ENCODE measurements at regions of chr2 and their contacts with region 1.

Region 1: GRCh38 chr2:190088917-190089316 is 26.4 kb upstream of the MSTN start:
- DNase-seq: peak; percentile 20
- ATAC-seq: peak; percentile 91
- H3K4me3 ChIP-seq: no peak overlapping the region
- H3K27ac ChIP-seq: no peak overlapping the region
- H3K4me1 ChIP-seq: no peaks in the 10 kb centered on the region
- H3K27me3 ChIP-seq: no peaks in the 10 kb centered on the region
- CTCF ChIP-seq: peak; percentile 60 to 82 (median 63); a peak in 5 of 6 replicates
- EP300 ChIP-seq: no peak
- POLR2A ChIP-seq: no peak
- RAD21 ChIP-seq: peak; percentile 93

Region 2: DNA sequence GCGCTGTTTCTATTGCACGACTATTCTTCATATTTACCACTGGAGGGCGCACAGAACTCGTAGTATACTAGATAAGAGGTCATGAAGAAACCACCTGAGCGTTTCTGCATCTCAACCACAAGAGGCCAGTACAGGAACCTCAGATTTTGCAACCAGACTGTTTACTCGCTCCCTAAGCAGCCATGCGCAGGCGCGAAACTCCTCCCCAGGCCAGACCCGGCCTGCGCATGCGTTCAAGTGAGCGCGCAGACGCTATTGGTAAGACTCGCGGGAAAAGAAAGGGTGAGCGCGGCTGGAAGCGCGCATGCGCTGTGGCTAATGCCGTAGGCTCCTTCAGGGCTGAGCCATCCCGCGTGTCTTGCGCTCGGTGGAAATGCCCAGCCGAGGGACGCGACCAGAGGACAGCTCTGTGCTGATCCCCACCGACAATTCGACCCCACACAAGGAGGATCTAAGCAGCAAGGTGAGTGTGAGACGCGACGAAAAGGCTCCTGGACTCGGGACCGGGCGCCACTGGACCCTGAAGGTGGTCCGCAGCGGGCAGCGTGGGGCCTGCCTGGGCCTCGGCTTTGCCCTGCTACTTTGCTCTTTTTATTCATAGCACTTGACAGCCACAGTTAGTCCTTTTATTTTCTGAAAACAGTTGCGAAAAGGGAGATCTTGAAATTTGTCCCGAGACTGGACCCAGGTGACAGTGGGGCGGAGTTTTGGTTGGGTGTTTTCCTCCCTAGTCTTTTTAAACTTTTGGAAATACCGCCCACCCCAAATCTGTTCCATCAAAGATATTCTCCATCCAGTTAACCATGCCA is 427.6 kb before region 1 on chr2 and contains the start of gene ASNSD1:
- CTCF ChIA-PET with region 1: interaction called, 3 read pairs
- POLR2A ChIA-PET with region 1: no interaction called
- RAD21 ChIA-PET with region 1: no interaction called
- SMC1A ChIA-PET with region 1: no interaction called
- in situ Hi-C with region 1: no loop called
- intact Hi-C with region 1: loop called (anchors 5 kb)
- DNase-seq: peak; percentile 99
- ATAC-seq: peak; percentile 91
- H3K4me3 ChIP-seq: peak within 1 kb of the TSS; percentile 82
- H3K27ac ChIP-seq: peak within 1 kb of the TSS; percentile 93
- H3K4me1 ChIP-seq: peaks cover 13% of the 10 kb centered on the region; the same call in 1 of the 2 replicates
- H3K27me3 ChIP-seq: no peaks in the 10 kb centered on the region
- CTCF ChIP-seq: peak; percentile 76 to 99 (median 97)
- EP300 ChIP-seq: no peak
- POLR2A ChIP-seq: peak; percentile 99
- RAD21 ChIP-seq: peak; percentile 93
- polyA plus RNA-seq, gene ASNSD1: 70.1 to 74.1 TPM

Region 3: GRCh38 chr2:190121971-190122370 is 33.1 kb after region 1 on chr2:
- CTCF ChIA-PET with region 1: interaction called, 31 read pairs
- POLR2A ChIA-PET with region 1: no interaction called
- RAD21 ChIA-PET with region 1: interaction called, 11 read pairs
- SMC1A ChIA-PET with region 1: interaction called, 26 read pairs
- in situ Hi-C with region 1: no loop called
- intact Hi-C with region 1: loop called (anchors 2 kb)
- DNase-seq: peak; percentile 9
- ATAC-seq: peak; percentile 88
- H3K4me3 ChIP-seq: no peak overlapping the region
- H3K27ac ChIP-seq: no peak overlapping the region
- H3K4me1 ChIP-seq: no peaks in the 10 kb centered on the region
- H3K27me3 ChIP-seq: no peaks in the 10 kb centered on the region
- CTCF ChIP-seq: peak; percentile 33 to 56 (median 37); a peak in 5 of 6 replicates
- EP300 ChIP-seq: no peak
- POLR2A ChIP-seq: no peak
- RAD21 ChIP-seq: peak; percentile 46

Region 4: DNA sequence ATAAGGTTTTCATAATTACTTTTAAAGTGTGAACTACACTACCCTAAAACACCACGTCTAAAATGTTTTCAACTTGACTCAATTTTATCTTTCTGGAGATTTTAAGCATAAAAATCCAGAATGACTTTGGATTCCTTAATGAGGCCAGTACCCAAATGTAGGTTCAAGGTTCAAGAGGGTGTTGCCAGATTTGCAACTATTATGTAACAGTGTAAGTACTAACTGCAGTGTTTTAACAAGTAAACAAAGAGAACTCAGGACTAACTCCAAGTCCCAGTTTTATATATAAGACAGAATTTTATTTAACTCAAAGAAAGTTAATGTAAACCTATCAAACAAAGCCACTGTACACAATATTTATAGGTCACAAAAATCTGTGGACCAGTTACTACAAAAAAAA is 225.0 kb after region 1 on chr2:
- CTCF ChIA-PET with region 1: interaction called, 34 read pairs
- POLR2A ChIA-PET with region 1: no interaction called
- RAD21 ChIA-PET with region 1: interaction called, 5 read pairs
- SMC1A ChIA-PET with region 1: interaction called, 6 read pairs
- in situ Hi-C with region 1: no loop called
- intact Hi-C with region 1: loop called (anchors 1 kb)
- DNase-seq: no peak
- ATAC-seq: no peak
- H3K4me3 ChIP-seq: no peak overlapping the region
- H3K27ac ChIP-seq: no peak overlapping the region
- H3K4me1 ChIP-seq: peaks cover 2% of the 10 kb centered on the region; the same call in 1 of the 2 replicates
- H3K27me3 ChIP-seq: no peaks in the 10 kb centered on the region
- CTCF ChIP-seq: no peak
- EP300 ChIP-seq: no peak
- POLR2A ChIP-seq: no peak
- RAD21 ChIP-seq: no peak

Region 5: GRCh38 chr2:190360561-190360960 is 271.6 kb after region 1 on chr2:
- CTCF ChIA-PET with region 1: interaction called, 10 read pairs
- POLR2A ChIA-PET with region 1: no interaction called
- RAD21 ChIA-PET with region 1: interaction called, 5 read pairs
- SMC1A ChIA-PET with region 1: interaction called, 3 read pairs
- in situ Hi-C with region 1: no loop called
- intact Hi-C with region 1: no loop called
- DNase-seq: no peak
- ATAC-seq: no peak
- H3K4me3 ChIP-seq: no peak overlapping the region
- H3K27ac ChIP-seq: no peak overlapping the region
- H3K4me1 ChIP-seq: peaks cover 8% of the 10 kb centered on the region
- H3K27me3 ChIP-seq: no peaks in the 10 kb centered on the region
- CTCF ChIP-seq: no peak
- EP300 ChIP-seq: no peak
- POLR2A ChIP-seq: no peak
- RAD21 ChIP-seq: no peak

Region 6: GRCh38 chr2:190511104-190511503 is 422.2 kb after region 1 on chr2:
- CTCF ChIA-PET with region 1: no interaction called
- POLR2A ChIA-PET with region 1: no interaction called
- RAD21 ChIA-PET with region 1: no interaction called
- SMC1A ChIA-PET with region 1: no interaction called
- in situ Hi-C with region 1: loop called (anchors 10 kb)
- intact Hi-C with region 1: loop called (anchors 5 kb)
- DNase-seq: no peak
- ATAC-seq: peak; percentile 31; the same call in 1 of the 3 replicates
- H3K4me3 ChIP-seq: no peak overlapping the region
- H3K27ac ChIP-seq: no peak overlapping the region
- H3K4me1 ChIP-seq: peaks cover 4% of the 10 kb centered on the region
- H3K27me3 ChIP-seq: no peaks in the 10 kb centered on the region
- CTCF ChIP-seq: peak; percentile 21 to 49 (median 27); a peak in 4 of 6 replicates
- EP300 ChIP-seq: no peak
- POLR2A ChIP-seq: no peak
- RAD21 ChIP-seq: peak; percentile 76

Measured in GM12878 (cell line).